ENCODE measurements at regions of chr11 and their contacts with region 1.

Region 1: DNA sequence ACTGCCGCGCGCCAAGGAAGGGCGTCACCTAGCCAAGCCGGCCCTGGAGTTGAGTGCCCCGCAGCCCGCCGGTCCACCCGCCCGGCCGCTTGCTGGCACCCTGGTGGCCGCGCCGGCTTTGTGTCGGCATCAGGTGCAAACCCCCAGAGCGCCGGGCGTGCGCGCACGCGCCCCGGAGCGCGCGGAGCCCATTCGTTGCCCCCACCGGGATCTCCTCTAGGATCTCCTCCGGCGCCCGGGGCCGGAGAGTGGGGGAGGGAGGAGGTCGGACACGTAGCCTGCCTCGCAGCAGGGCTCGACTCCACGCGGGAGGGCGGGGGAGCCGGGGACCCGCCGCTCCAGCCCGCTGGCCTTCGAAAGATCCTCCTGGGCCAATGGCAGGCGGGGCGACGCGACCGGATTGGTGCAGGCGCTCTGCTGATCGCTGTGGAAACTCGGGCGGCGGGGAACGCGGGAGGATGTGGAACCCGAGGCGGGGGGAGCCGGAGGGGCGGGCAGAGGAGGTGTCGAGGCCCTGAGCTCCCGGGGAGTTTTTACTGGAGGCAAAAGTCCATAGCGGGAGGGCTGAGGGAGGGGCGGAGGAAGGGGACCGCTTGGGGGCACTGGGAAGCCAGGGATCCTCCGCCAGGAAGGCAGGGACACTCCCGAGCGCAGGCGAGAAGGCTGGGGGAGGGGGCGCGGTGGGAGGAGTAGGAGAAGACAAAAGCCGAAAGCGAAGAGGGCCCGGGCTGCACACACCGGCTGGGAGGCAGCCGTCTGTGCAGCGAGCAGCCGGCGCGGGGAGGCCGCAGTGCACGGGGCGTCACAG is at the start of gene FADS2:
- DNase-seq: peak; percentile 81
- ATAC-seq: peak; percentile 87
- H3K4me3 ChIP-seq: peak within 1 kb of the TSS; percentile 100
- H3K27ac ChIP-seq: peak within 1 kb of the TSS; percentile 95
- H3K4me1 ChIP-seq: peaks cover 19% of the 10 kb centered on the region
- H3K27me3 ChIP-seq: no peaks in the 10 kb centered on the region
- CTCF ChIP-seq: peak in 2 of 3 experiments; percentile 9 to 14; a peak in 2 of 6 replicates
- EP300 ChIP-seq: no peak
- POLR2A ChIP-seq: peak; percentile 84
- RAD21 ChIP-seq: no peak
- polyA plus RNA-seq, gene FADS2: 3.3 to 6.4 TPM

Region 2: DNA sequence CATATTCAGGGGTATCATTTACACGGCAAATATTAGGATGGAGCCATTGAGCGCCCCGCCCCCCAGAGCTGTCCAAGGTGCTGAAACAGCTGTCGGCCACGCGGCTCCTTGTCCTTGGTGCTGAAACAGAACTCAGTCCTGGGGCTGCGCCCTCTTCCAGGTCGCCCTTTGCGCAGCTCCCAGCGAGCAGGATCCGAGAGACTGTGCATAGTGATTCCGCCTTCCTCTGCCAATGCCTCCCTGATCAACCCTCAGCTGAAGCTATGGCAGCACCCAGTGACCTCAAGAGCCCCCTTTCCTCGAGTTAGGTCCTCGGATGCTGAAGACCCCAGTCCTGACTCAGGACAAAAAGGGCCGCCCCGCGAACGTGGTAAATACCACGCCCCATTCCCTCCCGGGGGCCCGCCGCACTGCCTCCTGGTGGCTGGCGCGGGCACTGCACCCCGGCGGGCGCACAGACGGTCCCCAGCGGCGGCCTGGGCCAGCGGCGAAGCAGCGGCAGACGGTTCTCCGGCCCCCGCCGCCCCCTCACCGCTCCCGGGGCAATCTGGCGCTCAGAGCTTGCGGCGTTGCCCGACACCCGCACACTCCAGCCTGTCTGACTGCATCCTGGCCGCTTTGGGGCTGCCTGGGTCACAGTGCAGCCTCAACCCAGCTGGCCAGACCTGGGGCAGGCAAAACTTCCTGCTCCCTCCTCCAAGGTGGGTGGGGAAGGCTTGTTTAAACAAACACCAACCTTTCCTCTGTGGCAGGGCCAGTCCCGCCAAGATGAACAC is 260.3 kb before region 1 on chr11:
- CTCF ChIA-PET with region 1: no interaction called
- POLR2A ChIA-PET with region 1: no interaction called
- RAD21 ChIA-PET with region 1: no interaction called
- SMC1A ChIA-PET with region 1: no interaction called
- in situ Hi-C with region 1: no loop called
- intact Hi-C with region 1: no loop called
- DNase-seq: no peak
- ATAC-seq: peak; percentile 86
- H3K4me3 ChIP-seq: no peak overlapping the region
- H3K27ac ChIP-seq: no peak overlapping the region
- H3K4me1 ChIP-seq: no peaks in the 10 kb centered on the region
- H3K27me3 ChIP-seq: peaks cover 0 to 2% of the 10 kb centered on the region in 2 experiments; a peak in 3 of 4 replicates
- CTCF ChIP-seq: peak in 1 of 3 experiments; percentile 42; a peak in 2 of 6 replicates
- EP300 ChIP-seq: no peak
- POLR2A ChIP-seq: no peak
- RAD21 ChIP-seq: no peak

Region 3: DNA sequence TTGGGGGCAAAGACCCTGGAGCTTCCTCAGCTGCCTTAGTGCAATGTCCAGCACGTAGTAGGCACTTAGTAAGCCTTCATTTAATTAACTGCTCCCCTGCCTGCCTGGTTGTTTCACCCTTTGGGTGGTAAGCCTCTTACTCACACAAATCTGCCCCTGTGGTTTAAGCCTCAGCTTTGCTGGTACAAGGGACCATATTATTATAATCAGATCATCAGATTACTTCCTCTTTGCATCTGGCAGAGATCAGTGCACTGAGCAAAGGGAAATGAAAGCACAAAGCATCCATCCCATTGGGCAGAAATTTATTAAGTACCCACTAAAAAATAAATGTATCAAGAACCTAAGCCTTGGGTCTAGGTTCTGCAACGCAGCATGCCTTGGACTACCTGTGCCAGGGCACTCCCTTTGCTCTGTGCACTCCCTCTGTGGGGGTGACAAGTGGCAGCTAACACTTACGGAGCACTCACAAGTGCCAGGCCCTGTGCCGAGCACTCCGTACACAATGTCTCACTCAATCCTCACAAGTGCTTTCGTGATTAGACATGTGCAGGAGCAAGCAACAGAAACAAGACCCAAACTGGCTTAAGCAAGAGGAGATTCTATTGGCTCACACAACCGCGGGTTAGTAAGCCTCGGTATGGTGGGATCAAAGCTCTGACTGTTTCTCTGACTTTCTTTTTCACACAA is 182.5 kb before region 1 on chr11:
- CTCF ChIA-PET with region 1: no interaction called
- POLR2A ChIA-PET with region 1: no interaction called
- RAD21 ChIA-PET with region 1: no interaction called
- SMC1A ChIA-PET with region 1: no interaction called
- in situ Hi-C with region 1: no loop called
- intact Hi-C with region 1: no loop called
- DNase-seq: no peak
- ATAC-seq: no peak
- H3K4me3 ChIP-seq: no peak overlapping the region
- H3K27ac ChIP-seq: no peak overlapping the region
- H3K4me1 ChIP-seq: no peaks in the 10 kb centered on the region
- H3K27me3 ChIP-seq: peaks cover 0 to 2% of the 10 kb centered on the region in 2 experiments; a peak in 1 of 4 replicates
- CTCF ChIP-seq: no peak
- EP300 ChIP-seq: no peak
- POLR2A ChIP-seq: no peak
- RAD21 ChIP-seq: no peak

Region 4: DNA sequence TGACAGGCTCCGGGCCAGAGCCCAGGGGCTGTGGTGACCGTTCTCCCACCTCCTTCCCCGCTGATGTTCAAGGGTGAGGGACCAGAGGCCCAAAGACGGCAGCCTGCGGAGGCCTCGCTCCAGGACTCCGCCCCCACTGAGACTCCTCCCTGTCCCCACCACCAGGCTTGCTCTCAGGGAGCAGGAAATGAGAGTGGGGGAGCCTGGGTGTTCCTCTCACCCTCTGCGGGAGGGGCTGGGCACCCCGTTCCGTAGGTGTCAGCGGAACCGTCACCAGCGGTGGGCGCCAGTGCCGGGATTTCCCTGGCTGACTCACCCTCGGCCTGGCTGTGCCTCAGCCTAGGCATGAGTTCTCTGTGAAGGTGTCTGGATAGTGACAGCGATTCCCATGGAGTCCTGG is 131.9 kb before region 1 on chr11:
- CTCF ChIA-PET with region 1: no interaction called
- POLR2A ChIA-PET with region 1: no interaction called
- RAD21 ChIA-PET with region 1: no interaction called
- SMC1A ChIA-PET with region 1: no interaction called
- in situ Hi-C with region 1: no loop called
- intact Hi-C with region 1: no loop called
- DNase-seq: peak; percentile 27
- ATAC-seq: peak; percentile 86
- H3K4me3 ChIP-seq: no peak overlapping the region
- H3K27ac ChIP-seq: no peak overlapping the region
- H3K4me1 ChIP-seq: peaks cover 6% of the 10 kb centered on the region
- H3K27me3 ChIP-seq: peaks cover 0 to 2% of the 10 kb centered on the region in 2 experiments; a peak in 3 of 4 replicates
- CTCF ChIP-seq: no peak
- EP300 ChIP-seq: no peak
- POLR2A ChIP-seq: no peak
- RAD21 ChIP-seq: no peak

Region 5: DNA sequence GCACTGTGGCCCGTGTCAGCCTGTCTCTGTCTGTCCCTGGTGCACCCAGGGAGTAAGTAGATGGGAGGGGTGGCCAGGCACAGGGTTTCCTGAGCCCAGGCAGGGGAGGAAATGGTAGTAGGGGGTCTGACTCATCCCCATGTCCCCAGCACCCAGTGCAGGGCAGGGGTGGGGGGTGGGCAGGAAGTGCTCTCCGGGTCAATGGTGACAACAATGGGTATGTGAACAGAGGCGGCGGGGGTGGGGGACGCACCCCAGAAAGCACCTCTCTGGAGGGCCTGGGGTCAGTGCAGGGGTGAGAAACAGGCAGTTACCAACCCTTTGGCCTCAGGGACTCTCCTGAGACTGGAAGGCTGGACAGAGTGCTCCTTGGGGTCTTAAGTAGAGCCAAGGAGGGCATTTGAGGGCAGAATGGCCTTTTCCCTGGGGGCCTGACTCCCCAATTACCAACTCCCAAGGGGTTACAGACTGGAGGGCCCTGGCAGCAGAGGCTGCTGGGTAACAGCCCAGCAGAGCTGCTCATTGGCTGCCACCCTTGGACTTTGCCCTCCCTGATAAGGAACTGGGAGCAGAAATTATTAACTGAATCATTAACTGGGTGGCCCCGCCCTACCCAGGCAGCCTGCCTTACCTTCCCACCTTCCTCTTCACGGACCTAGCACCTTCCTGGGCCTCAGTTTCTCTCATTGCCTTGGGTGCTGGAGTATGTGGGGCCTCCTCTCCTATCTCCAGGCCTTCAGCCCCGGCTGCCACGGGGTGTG is 71.1 kb before region 1 on chr11:
- CTCF ChIA-PET with region 1: no interaction called
- POLR2A ChIA-PET with region 1: interaction called, 22 read pairs
- RAD21 ChIA-PET with region 1: interaction called, 7 read pairs
- SMC1A ChIA-PET with region 1: no interaction called
- in situ Hi-C with region 1: no loop called
- intact Hi-C with region 1: no loop called
- DNase-seq: peak; percentile 73
- ATAC-seq: peak; percentile 85
- H3K4me3 ChIP-seq: no peak overlapping the region
- H3K27ac ChIP-seq: no peak overlapping the region
- H3K4me1 ChIP-seq: peaks cover 8% of the 10 kb centered on the region
- H3K27me3 ChIP-seq: no peaks in the 10 kb centered on the region; a peak in 1 of 4 replicates
- CTCF ChIP-seq: no peak
- EP300 ChIP-seq: peak; percentile 48 to 49; a peak in 3 of 4 replicates
- POLR2A ChIP-seq: no peak; the same call in 1 of the 2 replicates
- RAD21 ChIP-seq: no peak

Region 6: DNA sequence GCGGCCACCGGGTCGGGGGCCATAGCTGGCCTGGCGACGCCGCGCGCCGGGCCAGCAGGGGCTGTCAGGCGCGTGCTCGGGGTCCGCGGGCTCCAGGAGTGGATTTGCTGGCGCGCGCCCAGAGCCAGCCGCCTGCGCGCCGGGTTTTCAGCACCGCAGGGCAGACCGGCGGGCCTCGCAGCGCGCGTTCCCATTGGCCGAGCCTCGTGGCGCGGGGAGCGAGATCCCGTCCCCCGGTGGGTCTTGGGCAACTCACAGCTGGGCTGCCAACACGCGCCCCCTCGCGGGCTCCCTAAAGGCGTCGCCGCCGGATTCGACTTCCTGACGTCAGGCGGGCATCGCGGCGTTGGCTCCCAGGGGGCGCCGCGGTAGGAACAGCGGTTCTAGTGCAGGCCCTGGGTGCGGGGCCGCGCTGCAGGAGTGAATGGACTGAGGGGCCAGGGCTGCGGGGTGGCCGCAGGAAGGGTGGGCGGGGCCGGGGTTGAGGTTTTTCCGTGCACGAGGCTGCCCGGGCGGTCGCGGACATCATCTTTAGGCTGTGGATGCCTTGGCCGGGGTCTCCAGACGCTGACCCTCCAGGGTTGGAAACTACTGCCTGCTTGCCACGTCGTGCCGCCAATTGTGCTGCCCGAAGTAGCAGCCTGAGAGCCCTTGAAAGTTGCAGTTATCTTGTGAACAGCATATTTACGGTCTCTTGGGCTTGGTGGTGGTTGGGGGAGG is 10.9 kb before region 1 on chr11 and contains the start of gene FADS1:
- CTCF ChIA-PET with region 1: interaction called, 56 read pairs
- POLR2A ChIA-PET with region 1: interaction called, 167 read pairs
- RAD21 ChIA-PET with region 1: interaction called, 51 read pairs
- SMC1A ChIA-PET with region 1: interaction called, 67 read pairs
- in situ Hi-C with region 1: no loop called
- intact Hi-C with region 1: loop called (anchors 1 kb)
- DNase-seq: peak; percentile 60
- ATAC-seq: peak; percentile 71
- H3K4me3 ChIP-seq: peak within 1 kb of the TSS; percentile 81
- H3K27ac ChIP-seq: peak within 1 kb of the TSS; percentile 87
- H3K4me1 ChIP-seq: peaks cover 3% of the 10 kb centered on the region; the same call in 1 of the 2 replicates
- H3K27me3 ChIP-seq: no peaks in the 10 kb centered on the region
- CTCF ChIP-seq: peak; percentile 53 to 73 (median 69)
- EP300 ChIP-seq: no peak
- POLR2A ChIP-seq: peak; percentile 60
- RAD21 ChIP-seq: no peak
- polyA plus RNA-seq, gene FADS1: 8.8 to 14.6 TPM

Measured in GM12878 (cell line).